Right ventricle myocardium inferior (tissue), 1 donor: ENCODE measurements at regions of chr1 and their contacts with region 1.

Region 1: GRCh38 chr1:228515200-228515834 is 28.1 kb downstream of the RNF187 start:
- DNase-seq: no peak
- ATAC-seq: no peak

Region 2: GRCh38 chr1:228131766-228132165 is 383.6 kb before region 1 on chr1:
- intact Hi-C with region 1: loop called (anchors 2 kb)
- DNase-seq: no peak
- ATAC-seq: no peak

Region 3: DNA sequence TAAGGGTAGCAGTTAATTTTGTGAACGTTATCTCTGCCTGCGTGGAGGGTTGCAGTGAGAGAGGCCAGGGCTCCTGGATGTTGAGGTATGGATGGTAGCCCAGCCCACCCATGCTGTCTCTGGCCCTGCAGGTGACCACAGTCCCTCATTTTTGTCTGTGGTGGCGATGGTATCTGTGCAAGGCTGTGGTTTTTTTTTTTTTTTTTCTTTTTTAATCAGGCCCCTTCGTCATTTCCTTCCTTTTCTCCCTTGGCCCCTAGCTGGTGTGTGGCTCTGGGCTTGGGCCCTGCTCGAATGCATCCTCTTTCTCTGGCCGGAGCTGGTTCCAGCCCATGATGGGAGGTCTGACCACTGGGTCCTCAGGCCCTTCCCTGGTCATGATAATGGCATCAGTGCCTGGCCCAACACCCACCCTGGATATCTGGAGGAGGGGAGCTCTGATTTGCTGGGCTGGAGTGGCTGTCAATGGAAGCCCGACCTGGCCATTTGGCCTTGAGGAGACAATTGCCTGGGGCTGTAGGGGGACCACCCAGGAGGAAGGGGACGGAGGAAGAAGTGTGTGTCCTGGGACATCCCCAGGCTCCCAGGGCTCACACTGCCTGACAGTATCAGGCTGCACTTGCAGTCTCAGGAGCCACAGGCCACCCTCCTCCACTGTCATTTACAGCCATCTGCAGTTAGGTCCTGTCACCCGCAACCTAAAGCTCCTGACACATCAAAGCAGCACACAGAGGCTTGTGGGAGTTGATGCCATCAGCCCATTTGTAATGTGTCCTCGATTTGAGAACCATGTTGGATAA is 36.2 kb before region 1 on chr1:
- intact Hi-C with region 1: no loop called
- DNase-seq: no peak
- ATAC-seq: no peak